ENCODE measurements at regions of chr6 and their contacts with region 1.

Region 1: GRCh38 chr6:26485112-26485780 is 14.9 kb upstream of the BTN1A1 start:
- DNase-seq: no peak

Region 2: GRCh38 chr6:26473758-26474438 is 11.3 kb before region 1 on chr6:
- CTCF ChIA-PET with region 1: interaction called, 4 read pairs
- POLR2A ChIA-PET with region 1: interaction called, 10 read pairs
- DNase-seq: peak; percentile 78

Region 3: DNA sequence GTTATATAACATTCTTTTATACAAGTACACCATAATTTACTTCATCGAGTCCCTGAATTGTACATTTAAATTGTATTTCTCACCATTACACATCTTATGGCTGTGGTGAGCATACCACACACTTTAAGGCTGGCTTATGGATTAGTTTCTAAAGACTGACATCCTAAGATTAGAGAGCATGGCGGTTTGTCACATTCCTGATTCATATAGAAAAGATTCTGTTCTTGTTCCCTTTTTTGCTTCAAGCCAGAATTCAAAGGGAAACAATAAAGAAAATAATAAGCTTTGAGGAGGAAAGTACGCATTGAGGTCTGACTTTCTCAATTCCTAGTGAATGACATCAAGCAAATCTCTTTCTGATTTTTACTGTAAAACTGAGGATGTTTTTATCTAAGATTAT is 17.4 kb after region 1 on chr6:
- CTCF ChIA-PET with region 1: no interaction called
- POLR2A ChIA-PET with region 1: no interaction called
- DNase-seq: no peak

Measured in HEK293T (cell line).